ENCODE measurements at regions of chr10 and their contacts with region 1.

Region 1: DNA sequence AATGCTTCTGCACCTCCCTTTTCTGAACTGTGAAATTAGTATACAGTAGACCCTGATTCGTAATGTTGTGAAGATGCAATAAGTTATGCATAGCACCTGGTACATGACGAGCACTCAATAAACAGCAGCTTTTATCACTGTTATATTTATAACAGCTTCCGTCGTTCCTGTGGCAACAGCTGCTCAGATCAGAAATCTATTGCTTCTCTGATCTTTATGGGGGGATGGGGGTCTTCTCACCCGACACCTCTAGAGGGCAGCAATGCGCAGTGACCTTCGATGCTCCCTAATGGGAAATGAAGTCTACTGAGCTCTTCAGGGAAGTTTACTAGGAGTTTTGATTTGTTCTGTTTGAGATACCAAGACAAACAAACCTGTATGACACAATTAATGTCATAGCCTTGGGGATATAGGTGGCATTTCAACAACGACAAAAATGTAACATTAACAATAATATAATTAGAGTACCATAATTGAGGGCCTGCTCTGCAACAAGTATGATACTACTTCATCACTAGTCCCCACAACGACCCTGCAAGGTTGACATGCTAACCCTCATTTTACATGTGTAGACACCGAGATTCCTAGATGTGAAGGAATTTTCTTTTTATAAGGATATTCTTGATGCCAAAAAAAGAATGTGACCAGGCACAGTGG is 289.6 kb downstream of the SFMBT2 start:
- DNase-seq: peak; percentile 78
- CTCF ChIP-seq: peak; percentile 76

Region 2: DNA sequence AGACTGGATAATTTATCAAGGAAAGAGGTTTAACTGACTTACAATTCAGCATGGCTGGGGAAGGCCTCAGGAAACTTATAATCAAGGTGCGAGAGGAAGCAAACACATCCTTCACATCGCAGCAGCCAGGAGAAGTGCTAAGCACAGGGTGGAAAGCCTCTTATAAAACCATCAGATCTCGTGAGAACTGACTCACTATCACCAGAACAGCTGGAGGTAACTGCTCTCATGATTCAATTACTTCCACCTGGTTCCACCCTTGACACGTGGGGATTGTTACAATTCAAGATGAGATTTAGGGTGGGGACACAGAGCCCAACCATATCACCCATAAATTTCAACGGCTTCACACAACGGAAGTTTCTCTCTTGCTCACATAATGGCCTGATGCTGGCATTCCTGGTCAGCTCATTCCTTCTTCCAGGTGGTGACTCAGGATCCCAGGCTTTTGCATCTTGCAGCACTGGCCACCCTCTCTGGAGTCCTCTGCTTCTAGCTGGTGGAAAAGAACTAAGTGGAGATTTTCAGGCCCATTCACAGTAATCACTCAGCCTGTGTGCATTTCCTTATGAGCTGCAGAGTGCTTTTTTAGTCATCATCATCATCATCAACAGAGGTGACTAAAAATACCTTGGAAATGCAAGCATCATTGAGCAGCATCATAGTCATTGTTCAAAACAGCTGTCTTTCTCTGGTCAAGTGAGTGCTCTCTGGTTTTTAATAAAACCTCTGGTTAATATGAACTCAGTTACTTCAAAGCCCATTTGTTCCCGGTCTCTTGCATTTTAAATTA is 18.5 kb before region 1 on chr10:
- CTCF ChIA-PET with region 1: interaction called, 11 read pairs
- POLR2A ChIA-PET with region 1: no interaction called
- DNase-seq: no peak
- CTCF ChIP-seq: no peak

Region 3: DNA sequence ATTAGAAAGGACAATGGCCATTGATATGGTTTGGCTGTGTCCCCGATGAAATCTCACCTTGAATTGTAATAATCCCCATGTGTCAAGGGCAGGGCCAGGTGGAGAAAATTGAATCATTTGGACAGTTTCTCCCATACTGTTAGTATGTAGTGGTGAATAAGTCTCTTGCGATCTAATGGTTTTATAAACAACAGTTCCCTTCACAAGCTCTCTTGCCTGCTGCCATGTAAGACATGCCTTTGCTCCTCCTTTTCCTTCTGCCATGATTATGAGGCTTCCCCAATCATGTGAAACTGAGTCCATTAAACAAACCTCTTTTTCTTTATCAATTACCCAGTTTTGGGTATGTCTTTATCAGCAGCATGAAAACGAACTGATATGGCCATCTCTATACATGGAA is 13.1 kb before region 1 on chr10:
- CTCF ChIA-PET with region 1: interaction called, 10 read pairs
- POLR2A ChIA-PET with region 1: no interaction called
- DNase-seq: no peak
- CTCF ChIP-seq: no peak

Region 4: DNA sequence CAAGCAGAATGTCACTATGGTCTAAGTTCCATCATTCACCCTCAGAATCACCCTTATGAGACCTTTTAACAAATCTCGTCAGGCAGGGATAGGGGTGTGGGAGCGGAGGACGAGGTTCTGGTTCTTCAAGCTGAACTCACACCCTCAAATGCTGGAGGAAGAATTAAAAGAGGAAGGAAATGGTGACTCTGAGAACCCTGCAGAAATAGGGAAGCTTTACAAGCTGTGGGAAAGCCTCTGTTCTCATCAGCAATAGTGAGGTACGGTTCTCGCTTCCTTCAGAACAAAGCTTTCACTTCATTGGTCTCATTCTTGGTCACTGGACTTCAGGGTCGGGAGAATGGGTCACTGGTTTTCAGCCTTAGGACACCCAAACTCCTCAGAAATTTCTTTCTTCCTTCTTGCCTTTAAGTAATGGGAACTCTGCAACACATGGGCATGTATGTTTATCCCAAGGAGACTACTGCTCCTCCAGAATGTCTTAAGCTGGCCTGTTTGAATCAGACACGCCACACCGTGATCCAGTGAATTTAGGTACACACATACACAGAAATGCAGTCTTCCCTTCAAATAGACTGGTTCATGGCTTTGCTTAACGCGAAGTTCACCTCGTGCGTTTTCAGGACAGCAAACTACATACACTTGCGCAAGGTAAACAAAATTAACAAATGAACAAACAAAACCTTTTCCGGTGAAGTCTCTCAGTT is 63.5 kb after region 1 on chr10:
- CTCF ChIA-PET with region 1: no interaction called
- POLR2A ChIA-PET with region 1: no interaction called
- DNase-seq: peak; percentile 47
- CTCF ChIP-seq: no peak

Region 5: DNA sequence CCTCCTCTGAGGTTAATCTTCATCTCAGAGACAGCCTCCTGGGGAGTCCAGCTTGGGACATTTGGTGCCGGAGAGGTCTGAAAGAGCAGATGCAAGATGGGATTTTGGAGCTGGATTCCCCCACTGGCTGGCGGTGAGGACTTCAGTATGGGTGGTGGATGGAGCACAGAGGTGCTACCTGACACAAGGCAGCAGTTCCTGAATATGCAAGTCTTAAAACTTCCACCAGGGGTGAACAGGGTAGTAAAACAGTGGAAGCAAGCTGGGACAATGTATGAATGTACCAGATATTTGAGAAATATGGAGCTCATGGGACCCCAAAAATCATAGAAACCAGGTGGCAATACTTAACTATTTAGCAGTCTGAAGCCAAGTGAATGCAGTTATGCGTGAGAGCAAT is 692.2 kb after region 1 on chr10:
- CTCF ChIA-PET with region 1: no interaction called
- POLR2A ChIA-PET with region 1: no interaction called
- DNase-seq: no peak
- CTCF ChIP-seq: no peak